CD4-positive, alpha-beta T cell (primary cell): ENCODE measurements at regions of chr16 and their contacts with region 1.

Region 1: DNA sequence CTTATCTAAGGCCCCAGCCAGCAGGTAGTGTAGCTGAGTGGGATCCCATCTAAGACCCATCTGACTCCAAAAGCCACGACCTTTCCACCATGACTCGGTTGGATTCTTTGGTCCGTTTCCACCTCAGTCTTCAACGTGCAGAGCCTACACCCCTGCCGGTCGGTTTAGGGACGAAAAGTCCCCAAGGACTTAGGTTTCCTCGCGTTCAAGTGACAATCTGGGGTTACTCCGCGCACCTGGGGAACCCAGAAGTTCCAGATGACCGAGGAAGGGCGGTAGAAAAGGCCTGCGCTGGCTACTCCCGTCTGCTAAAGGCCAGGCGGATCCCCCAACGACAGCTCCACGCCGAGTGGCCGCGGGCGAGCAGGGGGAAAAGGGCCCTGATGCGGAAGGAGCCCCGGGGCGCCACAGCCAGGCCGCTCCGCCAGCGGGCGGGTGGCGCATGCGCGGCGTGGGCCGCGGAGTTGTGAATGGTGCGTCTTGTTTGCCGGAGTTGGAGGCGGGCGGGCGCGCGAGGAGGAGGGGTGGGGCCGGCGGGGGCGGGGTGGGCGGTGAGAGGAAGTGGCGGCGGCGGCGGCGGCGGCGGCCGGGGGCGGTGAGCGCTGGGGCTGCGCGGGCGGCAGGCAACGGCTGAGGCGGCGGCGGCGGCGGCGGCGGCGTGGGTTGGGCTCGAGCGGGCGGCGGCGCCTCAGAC is at the start of gene CBFB:
- DNase-seq: peak; percentile 87 to 98 (median 95)
- ATAC-seq: peak; percentile 85
- H3K4me3 ChIP-seq: peak within 1 kb of the TSS; percentile 64
- H3K4me3 Mint-ChIP-seq: peak within 1 kb of the TSS; percentile 92
- H3K27ac ChIP-seq: peak within 1 kb of the TSS; percentile 81 to 93
- H3K27ac Mint-ChIP-seq: peak within 1 kb of the TSS; percentile 95
- H3K4me1 ChIP-seq: peaks cover 48% of the 10 kb centered on the region
- H3K4me1 Mint-ChIP-seq: peaks cover 40% of the 10 kb centered on the region
- H3K27me3 ChIP-seq: no peaks in the 10 kb centered on the region
- H3K27me3 Mint-ChIP-seq: no peaks in the 10 kb centered on the region
- CTCF ChIP-seq: peak; percentile 16
- total RNA-seq, gene CBFB: 58.8 to 59.6 TPM

Region 2: GRCh38 chr16:67017810-67018488 is 10.8 kb before region 1 on chr16:
- CTCF ChIA-PET with region 1: interaction called, 18 read pairs
- POLR2A ChIA-PET with region 1: interaction called, 34 read pairs
- intact Hi-C with region 1: no loop called
- DNase-seq: peak; percentile 74 to 93 (median 79)
- ATAC-seq: peak; percentile 90
- H3K4me3 ChIP-seq: no peak overlapping the region
- H3K4me3 Mint-ChIP-seq: peak overlapping the region; percentile 1
- H3K27ac ChIP-seq: no peak overlapping the region
- H3K27ac Mint-ChIP-seq: no peak overlapping the region
- H3K4me1 ChIP-seq: peaks cover 26% of the 10 kb centered on the region
- H3K4me1 Mint-ChIP-seq: no peaks in the 10 kb centered on the region
- H3K27me3 ChIP-seq: peaks cover 0 to 2% of the 10 kb centered on the region in 2 experiments
- H3K27me3 Mint-ChIP-seq: no peaks in the 10 kb centered on the region
- CTCF ChIP-seq: peak; percentile 50

Region 3: DNA sequence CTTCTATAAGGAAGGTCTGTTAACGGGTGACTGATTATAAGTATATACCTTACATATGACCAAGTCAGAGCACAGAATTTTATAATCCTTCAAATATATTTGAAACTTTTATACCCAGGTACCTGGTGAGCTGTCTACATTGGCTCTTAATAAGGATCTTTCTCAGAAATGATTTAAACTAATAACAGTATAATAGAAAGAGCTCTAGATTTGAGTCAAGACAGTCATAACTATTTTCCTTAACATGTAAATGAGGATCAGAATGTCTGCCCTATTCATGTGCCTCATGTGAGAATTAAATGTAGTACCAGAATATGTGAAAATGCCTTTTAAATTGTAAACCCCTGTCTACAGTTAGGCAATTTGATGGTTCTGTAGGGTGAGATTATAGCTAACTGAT is 14.7 kb after region 1 on chr16:
- CTCF ChIA-PET with region 1: interaction called, 10 read pairs
- POLR2A ChIA-PET with region 1: interaction called, 9 read pairs
- intact Hi-C with region 1: no loop called
- DNase-seq: no peak
- ATAC-seq: no peak
- H3K4me3 ChIP-seq: no peak overlapping the region
- H3K4me3 Mint-ChIP-seq: no peak overlapping the region
- H3K27ac ChIP-seq: no peak overlapping the region
- H3K27ac Mint-ChIP-seq: no peak overlapping the region
- H3K4me1 ChIP-seq: no peaks in the 10 kb centered on the region
- H3K4me1 Mint-ChIP-seq: peaks cover 38% of the 10 kb centered on the region
- H3K27me3 ChIP-seq: no peaks in the 10 kb centered on the region
- H3K27me3 Mint-ChIP-seq: no peaks in the 10 kb centered on the region
- CTCF ChIP-seq: no peak

Region 4: DNA sequence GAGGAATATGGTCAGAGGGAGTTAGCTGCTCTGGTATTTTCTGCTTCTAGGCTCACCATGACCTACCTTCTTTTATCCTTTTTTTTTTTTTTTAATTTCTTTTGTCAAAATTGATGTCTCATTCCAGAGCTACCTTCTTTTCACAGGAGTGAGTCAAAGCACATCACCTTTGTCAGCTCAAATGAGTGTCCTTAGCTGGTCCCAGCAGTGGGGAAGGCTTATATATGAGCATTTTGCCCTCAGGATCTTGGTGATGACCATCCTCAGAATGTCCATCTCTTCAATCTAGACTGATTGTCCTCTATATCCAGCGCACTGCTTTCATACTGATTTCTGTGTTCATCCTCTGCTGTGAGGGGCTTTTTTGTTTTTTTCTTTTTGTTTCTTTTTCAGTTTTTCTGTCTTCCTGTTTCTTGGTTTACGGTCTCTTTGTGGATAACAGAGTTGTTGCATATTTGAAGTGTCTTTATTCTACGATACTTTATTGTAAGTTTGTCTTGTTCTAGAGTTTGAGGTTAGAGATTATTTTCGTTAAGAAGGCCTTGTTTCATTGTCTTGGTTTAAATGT is 25.1 kb after region 1 on chr16:
- CTCF ChIA-PET with region 1: interaction called, 4 read pairs
- POLR2A ChIA-PET with region 1: interaction called, 13 read pairs
- intact Hi-C with region 1: no loop called
- DNase-seq: peak in 3 of 14 experiments; percentile 19 to 39 (median 23)
- ATAC-seq: no peak
- H3K4me3 ChIP-seq: peak overlapping the region; percentile 25
- H3K4me3 Mint-ChIP-seq: peak overlapping the region; percentile 81
- H3K27ac ChIP-seq: peak overlapping the region; percentile 25 to 71
- H3K27ac Mint-ChIP-seq: peak overlapping the region; percentile 83
- H3K4me1 ChIP-seq: peaks cover 26% of the 10 kb centered on the region
- H3K4me1 Mint-ChIP-seq: peaks cover 50% of the 10 kb centered on the region
- H3K27me3 ChIP-seq: no peaks in the 10 kb centered on the region
- H3K27me3 Mint-ChIP-seq: no peaks in the 10 kb centered on the region
- CTCF ChIP-seq: no peak

Region 5: GRCh38 chr16:67109407-67110135 is 80.9 kb after region 1 on chr16 and contains the start of gene PHAF1:
- CTCF ChIA-PET with region 1: interaction called, 4 read pairs
- POLR2A ChIA-PET with region 1: interaction called, 3 read pairs
- intact Hi-C with region 1: loop called in 1 of 2 experiments (anchors 2 kb)
- DNase-seq: peak; percentile 92 to 98 (median 96)
- ATAC-seq: peak; percentile 88
- H3K4me3 ChIP-seq: peak within 1 kb of the TSS; percentile 88
- H3K4me3 Mint-ChIP-seq: peak within 1 kb of the TSS; percentile 96
- H3K27ac ChIP-seq: peak within 1 kb of the TSS; percentile 26 to 29
- H3K27ac Mint-ChIP-seq: peak within 1 kb of the TSS; percentile 84
- H3K4me1 ChIP-seq: peaks cover 24% of the 10 kb centered on the region
- H3K4me1 Mint-ChIP-seq: peaks cover 26% of the 10 kb centered on the region
- H3K27me3 ChIP-seq: no peaks in the 10 kb centered on the region
- H3K27me3 Mint-ChIP-seq: no peaks in the 10 kb centered on the region
- CTCF ChIP-seq: no peak
- total RNA-seq, gene PHAF1: 10.6 to 10.8 TPM

Region 6: GRCh38 chr16:67296422-67296821 is 267.7 kb after region 1 on chr16:
- CTCF ChIA-PET with region 1: no interaction called
- POLR2A ChIA-PET with region 1: no interaction called
- intact Hi-C with region 1: no loop called
- DNase-seq: no peak
- ATAC-seq: no peak
- H3K4me3 ChIP-seq: no peak overlapping the region
- H3K4me3 Mint-ChIP-seq: no peak overlapping the region
- H3K27ac ChIP-seq: no peak overlapping the region
- H3K27ac Mint-ChIP-seq: no peak overlapping the region
- H3K4me1 ChIP-seq: no peaks in the 10 kb centered on the region
- H3K4me1 Mint-ChIP-seq: no peaks in the 10 kb centered on the region
- H3K27me3 ChIP-seq: peaks cover 0 to 5% of the 10 kb centered on the region in 2 experiments
- H3K27me3 Mint-ChIP-seq: peaks cover 4% of the 10 kb centered on the region
- CTCF ChIP-seq: no peak